Cardiac septum (tissue), 1 donor: ENCODE measurements at regions of chr3 and their contacts with region 1.

Region 1: DNA sequence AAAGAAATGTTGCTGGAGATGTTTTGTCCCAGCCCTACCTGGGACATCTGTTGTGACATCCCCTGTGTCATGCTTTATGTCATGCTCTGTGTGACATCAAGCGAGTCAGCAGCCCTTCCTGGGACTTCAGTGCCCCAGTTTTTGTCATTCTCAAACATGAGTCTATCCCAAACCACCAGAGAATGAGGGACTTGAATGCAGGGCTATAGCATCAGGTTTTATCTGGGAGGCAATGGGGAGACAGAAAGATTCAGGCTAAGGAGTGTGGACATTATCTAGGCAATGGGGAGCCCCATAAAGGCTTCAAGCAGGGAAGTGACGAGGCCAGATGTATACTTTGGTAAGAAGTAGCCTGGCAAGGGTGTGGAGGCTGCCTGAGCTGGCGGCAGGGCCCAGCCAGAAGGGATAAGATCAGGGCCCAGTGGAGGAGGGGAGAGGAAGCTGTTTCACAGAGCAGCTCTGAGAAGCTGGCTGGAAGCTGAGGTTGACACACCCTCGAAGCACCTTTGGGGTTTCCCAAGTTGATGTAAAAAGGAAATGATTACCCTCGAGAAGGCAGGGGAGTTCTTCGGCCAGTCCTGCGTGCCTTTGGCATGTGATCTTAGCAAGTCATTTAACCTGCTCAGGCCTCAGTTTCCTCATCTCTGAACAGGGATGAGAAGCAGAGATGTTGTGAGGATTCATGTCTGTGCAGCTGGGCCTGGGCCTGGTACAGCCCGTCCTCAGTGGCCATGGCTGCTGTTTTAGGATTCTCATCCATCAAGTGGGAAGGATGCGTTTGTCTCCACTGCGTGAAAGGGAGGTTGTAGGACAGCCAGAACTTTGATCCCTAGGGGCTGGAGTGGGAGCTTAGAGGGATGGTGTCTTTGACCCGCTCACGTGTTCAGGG is 34.3 kb downstream of the IRAK2 start:
- DNase-seq: no peak

Region 2: DNA sequence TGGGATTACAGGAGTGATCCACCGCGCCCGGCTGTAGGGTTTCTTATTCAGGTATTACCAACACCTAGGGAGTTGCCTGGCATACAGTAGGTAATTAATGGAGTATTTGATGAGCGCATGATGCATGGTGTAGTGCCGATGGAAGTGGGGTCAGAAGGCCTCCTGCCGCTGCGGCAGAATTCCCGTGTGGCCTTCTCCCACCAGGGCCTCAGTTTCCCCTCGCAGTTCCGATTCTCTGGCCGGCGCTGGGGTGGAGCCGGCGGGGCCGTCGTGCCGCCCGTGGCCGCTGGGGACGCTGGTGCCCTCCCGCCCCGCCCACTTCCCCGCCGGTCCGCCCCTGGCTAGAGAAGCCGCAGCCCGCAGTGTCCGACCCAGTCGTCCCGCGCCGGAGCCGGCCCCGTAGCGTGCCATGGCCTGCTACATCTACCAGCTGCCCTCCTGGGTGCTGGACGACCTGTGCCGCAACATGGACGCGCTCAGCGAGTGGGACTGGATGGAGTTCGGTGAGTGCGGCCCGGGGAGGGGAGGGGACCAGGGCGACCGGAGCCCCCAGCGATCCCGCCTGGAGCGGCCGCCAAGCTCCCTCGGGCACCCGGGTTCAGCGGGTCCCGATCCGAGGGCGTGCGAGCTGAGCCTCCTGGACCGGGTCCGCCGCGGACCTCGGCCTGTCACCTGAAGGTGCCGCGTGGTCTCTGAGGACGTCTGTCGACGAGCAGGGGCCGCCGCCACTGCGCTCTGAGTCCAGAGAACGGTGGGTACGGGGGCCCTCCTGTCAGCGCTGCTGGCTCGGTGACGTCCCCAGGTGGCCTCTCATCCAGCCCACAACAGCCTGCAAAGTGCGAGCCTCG is 34.2 kb before region 1 on chr3 and contains the start of gene IRAK2:
- intact Hi-C with region 1: loop called (anchors 2 kb)
- DNase-seq: peak; percentile 92
- total RNA-seq, gene IRAK2: 1.9 TPM